Sciatic nerve (tissue), 2 donors: ENCODE measurements at regions of chr5 and their contacts with region 1.

Region 1: GRCh38 chr5:160757194-160757593 is 94.8 kb downstream of the ATP10B start:
- DNase-seq: no peak
- ATAC-seq: no peak

Region 2: DNA sequence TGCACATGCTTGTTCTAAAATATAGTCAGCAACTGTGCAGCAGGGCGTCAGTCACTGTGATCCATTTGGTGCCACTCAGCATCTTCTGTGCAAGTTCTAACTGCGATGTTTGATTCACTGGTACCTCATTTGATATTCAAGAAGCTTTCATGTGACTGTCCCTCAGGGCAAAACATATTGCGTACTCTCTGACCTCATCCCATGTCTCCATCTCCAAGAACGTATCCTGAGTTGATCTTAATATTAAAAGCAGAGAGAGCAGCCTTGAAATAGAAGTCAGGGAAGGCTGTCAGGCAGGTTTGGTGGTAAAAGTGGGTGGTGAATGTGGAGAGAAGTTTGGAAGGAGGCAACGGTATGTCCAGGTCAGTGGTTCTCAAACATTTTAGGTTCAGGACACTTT is 211.3 kb after region 1 on chr5:
- intact Hi-C with region 1: loop called (anchors 5 kb)
- DNase-seq: no peak
- ATAC-seq: no peak